ENCODE measurements at regions of chr19 and their contacts with region 1.

Region 1: DNA sequence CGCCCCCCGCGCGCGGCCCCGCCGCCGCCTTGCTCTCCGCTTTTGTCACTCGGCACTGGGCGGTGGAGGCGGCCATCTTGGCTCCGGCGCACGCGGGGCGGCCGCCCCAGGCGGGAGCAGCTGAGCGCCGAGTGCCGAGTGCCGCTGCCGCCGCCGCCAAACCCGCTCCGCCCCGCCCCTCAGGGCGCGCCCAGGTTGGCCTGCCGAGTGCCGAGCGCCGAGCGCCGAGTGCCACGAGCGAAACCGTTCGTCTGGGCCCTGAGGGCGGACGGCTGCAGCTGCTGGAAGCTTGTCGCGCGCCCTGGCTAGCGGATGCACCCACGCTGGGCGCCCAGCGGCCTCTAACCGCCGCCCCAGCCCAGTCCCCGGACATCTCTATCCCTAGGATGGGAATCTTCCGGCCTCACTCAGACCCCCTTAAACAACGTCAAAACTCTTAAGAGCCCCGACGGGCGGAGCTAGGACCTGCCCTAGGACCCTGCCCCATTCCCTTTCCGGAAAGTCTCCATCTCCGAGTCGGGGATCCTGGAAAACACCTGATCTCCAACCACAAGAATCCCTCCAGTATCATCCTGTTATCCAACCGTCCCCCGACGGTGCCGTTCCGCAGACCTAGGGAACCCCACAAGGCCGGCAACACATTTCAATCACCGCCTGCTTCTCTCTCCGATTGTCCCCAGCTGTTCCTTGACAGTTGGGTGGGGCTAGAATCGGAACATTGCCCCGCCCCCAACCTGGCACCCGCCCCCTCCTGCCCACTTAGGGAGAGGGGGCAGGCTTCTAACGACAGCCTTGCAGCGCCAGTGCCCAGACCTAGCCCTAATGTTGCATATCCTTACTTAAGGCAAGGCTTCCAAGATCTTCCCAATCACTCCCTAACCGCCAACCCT is 14.1 kb upstream of the AKAP8L start:
- DNase-seq: peak; percentile 33 to 93
- H3K4me3 ChIP-seq: peak overlapping the region; percentile 92 to 95
- H3K27ac ChIP-seq: peak overlapping the region; percentile 89 to 94
- H3K4me1 ChIP-seq: peaks cover 13 to 37% of the 10 kb centered on the region in 2 donors
- H3K27me3 ChIP-seq: no peaks in the 10 kb centered on the region
- CTCF ChIP-seq: no peak

Region 2: DNA sequence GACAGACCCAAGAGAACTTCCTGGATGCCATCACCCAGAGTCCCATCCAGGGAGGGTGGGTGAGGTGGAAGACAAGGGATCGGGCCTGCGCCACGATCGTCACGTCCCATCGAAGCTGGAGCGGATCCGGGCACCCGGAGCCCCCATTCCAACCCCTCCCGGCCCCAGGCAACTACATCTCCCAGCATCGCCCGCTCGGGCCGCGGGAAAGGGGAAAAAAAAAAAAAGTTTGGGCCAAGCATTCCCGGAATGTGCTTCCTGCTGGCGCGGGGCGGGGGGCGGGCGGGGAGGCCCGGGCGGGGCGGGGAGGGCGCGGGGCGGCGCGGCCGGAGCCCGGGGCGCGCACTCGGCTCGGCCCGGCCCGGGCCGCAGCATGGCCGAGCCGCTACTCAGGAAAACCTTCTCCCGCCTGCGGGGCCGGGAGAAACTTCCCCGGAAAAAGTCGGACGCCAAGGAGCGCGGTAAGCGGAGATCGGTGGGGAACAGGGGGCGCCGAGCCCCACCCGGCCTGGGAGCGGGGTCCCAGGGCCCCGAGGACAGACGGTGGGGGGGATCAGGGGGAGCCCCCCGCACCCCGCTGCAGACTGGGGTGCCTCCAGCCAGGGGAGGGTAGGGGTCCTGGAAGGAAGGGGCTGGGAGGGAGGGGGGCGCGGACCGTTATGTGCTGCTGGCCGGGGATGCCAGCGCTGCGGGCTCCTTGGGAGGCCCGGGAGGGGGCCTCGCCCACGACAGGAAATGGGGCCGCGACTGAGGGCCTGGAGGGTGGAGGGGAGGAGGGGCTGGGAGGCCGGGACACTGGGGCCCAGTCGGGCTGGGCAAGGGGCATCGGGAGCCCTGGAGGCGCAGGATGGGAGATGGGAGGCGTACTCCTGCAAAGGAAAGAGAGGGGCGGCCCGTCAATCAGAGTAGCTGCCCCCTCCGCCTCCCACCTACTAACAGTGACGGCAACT is 325.5 kb before region 1 on chr19 and contains the start of gene SYDE1:
- intact Hi-C with region 1: loop called (anchors 5 kb)
- DNase-seq: peak in 1 of 2 donors; percentile 78
- H3K4me3 ChIP-seq: peak within 1 kb of the TSS; percentile 84 to 95
- H3K27ac ChIP-seq: peak within 1 kb of the TSS; percentile 92 to 97
- H3K4me1 ChIP-seq: peaks cover 4 to 10% of the 10 kb centered on the region in 2 donors
- H3K27me3 ChIP-seq: no peaks in the 10 kb centered on the region
- CTCF ChIP-seq: no peak
- total RNA-seq, gene SYDE1: 104 TPM

Region 3: GRCh38 chr19:15177269-15178116 is 255.4 kb before region 1 on chr19:
- intact Hi-C with region 1: loop called (anchors 5 kb)
- DNase-seq: peak in 1 of 2 donors; percentile 89
- H3K4me3 ChIP-seq: peak overlapping the region; percentile 28 to 51
- H3K27ac ChIP-seq: peak overlapping the region; percentile 55 to 72
- H3K4me1 ChIP-seq: no peaks in the 10 kb centered on the region
- H3K27me3 ChIP-seq: no peaks in the 10 kb centered on the region
- CTCF ChIP-seq: peak; percentile 95 to 99 (median 95)

Region 4: GRCh38 chr19:15195371-15196334 is 237.2 kb before region 1 on chr19:
- intact Hi-C with region 1: loop called (anchors 5 kb)
- DNase-seq: peak; percentile 57 to 93
- H3K4me3 ChIP-seq: peak overlapping the region; percentile 58 to 69
- H3K27ac ChIP-seq: peak overlapping the region; percentile 96
- H3K4me1 ChIP-seq: peaks cover 0 to 35% of the 10 kb centered on the region in 2 donors
- H3K27me3 ChIP-seq: no peaks in the 10 kb centered on the region
- CTCF ChIP-seq: peak in 1 of 3 experiments; percentile 14

Region 5: DNA sequence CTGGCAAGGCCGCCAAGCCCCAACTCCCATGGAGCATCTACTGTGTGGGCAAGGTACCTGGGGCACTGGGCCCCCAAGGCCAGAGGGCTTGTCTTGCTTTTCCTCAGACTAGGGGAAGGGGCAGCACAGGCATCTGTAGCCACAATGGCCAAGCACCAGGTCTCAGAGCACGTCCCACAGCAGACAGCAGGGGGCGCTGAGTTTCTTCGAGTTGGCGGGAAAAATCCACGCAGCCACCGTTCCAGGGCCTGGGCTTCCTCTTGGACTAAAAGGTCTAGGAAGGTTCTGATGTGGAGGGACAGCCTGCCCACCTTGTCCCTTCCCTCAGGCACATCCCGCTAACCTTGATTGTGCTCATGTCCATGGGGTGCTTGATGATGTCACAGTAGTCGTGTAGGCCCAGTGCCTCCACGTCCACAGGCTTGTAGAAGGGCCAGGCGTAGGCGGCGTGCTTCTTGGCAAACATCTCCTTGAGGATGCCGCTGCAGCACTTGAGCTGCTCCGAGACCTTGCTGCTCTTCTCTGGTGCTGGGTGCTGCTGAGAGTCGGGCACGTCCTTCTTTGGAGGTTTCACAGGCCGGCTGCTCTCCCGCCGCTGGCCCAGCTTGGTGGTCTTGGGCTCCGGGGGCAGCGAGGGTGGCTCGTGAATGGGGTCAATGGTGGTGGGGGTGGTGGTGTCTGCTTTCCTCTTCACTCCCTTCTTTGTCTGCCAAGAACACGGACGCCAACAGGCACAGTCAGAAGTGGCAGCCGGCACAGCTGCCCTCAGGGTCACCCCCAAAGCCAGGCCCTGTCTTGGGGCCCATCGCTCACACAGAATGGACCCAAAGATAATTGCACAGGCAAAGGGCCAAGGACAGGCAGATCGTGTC is 168.6 kb before region 1 on chr19:
- intact Hi-C with region 1: loop called (anchors 5 kb)
- DNase-seq: peak in 1 of 2 donors; percentile 89
- H3K4me3 ChIP-seq: no peak overlapping the region
- H3K27ac ChIP-seq: peak overlapping the region; percentile 69 to 83
- H3K4me1 ChIP-seq: peaks cover 19 to 40% of the 10 kb centered on the region in 2 donors
- H3K27me3 ChIP-seq: no peaks in the 10 kb centered on the region
- CTCF ChIP-seq: peak; percentile 78 to 87 (median 78)

Region 6: DNA sequence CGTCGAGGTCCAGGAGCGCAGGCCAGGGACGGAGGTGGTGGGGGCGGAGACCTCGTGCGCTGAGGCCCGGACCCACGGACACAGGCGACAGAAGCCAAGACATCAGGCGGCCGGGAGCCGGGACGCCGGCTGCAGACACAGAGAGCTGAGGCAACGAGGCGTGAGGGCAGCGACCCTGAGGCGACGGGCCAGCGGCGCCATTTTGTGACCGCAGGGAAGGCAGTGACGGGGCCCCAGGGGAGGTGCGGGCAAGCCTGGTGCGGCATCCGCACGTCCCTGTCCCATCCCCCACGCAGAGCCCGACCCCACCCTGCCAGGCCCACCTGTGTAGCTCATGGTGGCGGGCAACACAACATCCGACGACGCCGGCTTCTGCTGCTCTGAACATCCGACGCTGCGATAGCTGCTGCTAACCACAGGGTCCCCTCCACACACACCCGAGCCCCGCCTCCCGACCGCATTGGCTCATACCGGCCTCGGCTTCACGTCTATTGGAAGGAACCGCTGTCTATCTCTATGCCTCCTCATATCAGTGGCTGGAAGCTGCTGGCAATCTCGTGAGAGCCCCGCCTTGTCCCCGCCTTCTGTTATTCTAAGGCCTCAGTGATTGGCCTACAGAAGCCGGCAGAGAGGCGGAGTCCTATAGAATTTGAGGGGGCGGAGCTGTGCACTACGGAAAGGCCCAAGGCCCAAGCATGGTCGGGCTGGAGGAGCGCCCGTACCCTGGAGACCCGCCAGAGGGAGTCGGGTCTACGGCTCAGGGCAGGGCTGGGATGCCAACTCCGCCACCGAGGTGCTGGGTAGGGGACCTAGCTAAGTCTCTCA is 14.1 kb before region 1 on chr19 and contains the start of gene AKAP8L:
- intact Hi-C with region 1: loop called (anchors 1 kb)
- DNase-seq: peak; percentile 99 to 100
- H3K4me3 ChIP-seq: peak within 1 kb of the TSS; percentile 88 to 97
- H3K27ac ChIP-seq: peak within 1 kb of the TSS; percentile 87 to 88
- H3K4me1 ChIP-seq: peaks cover 5 to 35% of the 10 kb centered on the region in 2 donors
- H3K27me3 ChIP-seq: no peaks in the 10 kb centered on the region
- CTCF ChIP-seq: peak; percentile 25 to 60 (median 45)
- total RNA-seq, gene AKAP8L: 143 TPM

Region 7: GRCh38 chr19:15449620-15450527 is 17.0 kb after region 1 on chr19 and contains the start of gene WIZ:
- intact Hi-C with region 1: loop called (anchors 2 kb)
- DNase-seq: peak; percentile 43 to 94
- H3K4me3 ChIP-seq: peak within 1 kb of the TSS; percentile 53 to 89
- H3K27ac ChIP-seq: peak within 1 kb of the TSS; percentile 64 to 86
- H3K4me1 ChIP-seq: peaks cover 17 to 36% of the 10 kb centered on the region in 2 donors
- H3K27me3 ChIP-seq: no peaks in the 10 kb centered on the region
- CTCF ChIP-seq: no peak
- total RNA-seq, gene WIZ: 90.4 TPM

Region 8: DNA sequence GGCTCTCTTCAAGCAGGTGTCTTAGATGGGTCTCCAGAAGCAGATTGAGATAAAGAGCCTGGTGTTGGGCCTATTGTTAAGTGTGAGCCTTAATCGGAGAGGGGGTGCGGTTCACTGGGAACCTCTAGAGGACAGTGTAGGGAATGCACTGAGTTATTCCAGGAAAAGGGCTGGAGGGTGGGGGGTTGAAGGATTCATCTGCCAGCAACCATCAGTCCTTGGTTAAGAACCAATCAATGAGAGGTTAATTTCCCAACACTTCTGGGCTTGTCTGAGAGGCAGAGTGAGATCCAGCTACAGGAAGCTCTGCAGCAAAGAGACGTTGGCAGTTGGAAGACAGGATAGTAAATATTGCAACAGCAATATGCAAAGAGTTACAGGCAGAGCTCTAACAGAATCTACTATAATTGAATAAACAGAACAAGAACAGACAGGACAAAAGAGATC is 436.3 kb after region 1 on chr19:
- intact Hi-C with region 1: no loop called
- DNase-seq: peak in 1 of 2 donors; percentile 52
- H3K4me3 ChIP-seq: no peak overlapping the region
- H3K27ac ChIP-seq: no peak overlapping the region
- H3K4me1 ChIP-seq: no peaks in the 10 kb centered on the region
- H3K27me3 ChIP-seq: no peaks in the 10 kb centered on the region
- CTCF ChIP-seq: peak; percentile 44 to 63 (median 52)

Measured in ascending aorta (tissue), 2 donors.